MCF 10A (cell line): ENCODE measurements at regions of chr10 and their contacts with region 1.

Region 1: DNA sequence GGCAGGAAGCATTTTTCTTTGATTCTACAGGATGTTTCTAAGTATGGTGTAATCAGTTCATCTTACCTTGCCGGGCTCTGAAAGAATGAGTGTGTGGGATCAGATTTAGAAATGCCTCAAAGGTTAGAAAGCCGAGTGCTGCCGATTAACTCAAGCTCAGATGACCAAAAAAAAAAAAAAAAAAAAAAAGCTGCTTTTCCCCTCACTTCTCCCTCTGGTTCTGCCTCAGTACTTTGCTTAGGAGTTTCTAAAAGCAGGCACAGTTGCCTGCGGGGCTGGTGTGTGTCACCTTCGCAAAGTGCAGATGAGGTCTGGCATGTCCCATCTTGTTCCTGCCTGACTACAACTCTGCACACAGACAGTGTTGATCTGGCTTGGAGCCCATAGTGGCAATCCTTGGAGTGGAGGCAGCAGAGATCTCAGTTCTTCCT is 47.0 kb downstream of the KIAA1217 start:
- DNase-seq: peak; percentile 93
- H3K4me3 Mint-ChIP-seq: peak overlapping the region; percentile 84
- H3K27ac Mint-ChIP-seq: peak overlapping the region; percentile 97
- H3K4me1 Mint-ChIP-seq: peaks cover 42% of the 10 kb centered on the region
- H3K27me3 Mint-ChIP-seq: no peaks in the 10 kb centered on the region
- CTCF ChIP-seq: no peak

Region 2: GRCh38 chr10:24209946-24210491 is 45.9 kb before region 1 on chr10:
- CTCF ChIA-PET with region 1: interaction called, 3 read pairs
- POLR2A ChIA-PET with region 1: interaction called, 29 read pairs
- intact Hi-C with region 1: no loop called
- DNase-seq: peak; percentile 74
- H3K4me3 Mint-ChIP-seq: peak overlapping the region; percentile 76
- H3K27ac Mint-ChIP-seq: peak overlapping the region; percentile 1
- H3K4me1 Mint-ChIP-seq: peaks cover 22% of the 10 kb centered on the region
- H3K27me3 Mint-ChIP-seq: no peaks in the 10 kb centered on the region
- CTCF ChIP-seq: no peak

Region 3: GRCh38 chr10:24292304-24293293 is 36.7 kb after region 1 on chr10:
- CTCF ChIA-PET with region 1: no interaction called
- POLR2A ChIA-PET with region 1: interaction called, 12 read pairs
- intact Hi-C with region 1: loop called (anchors 5 kb)
- DNase-seq: peak; percentile 11
- H3K4me3 Mint-ChIP-seq: no peak overlapping the region
- H3K27ac Mint-ChIP-seq: peak overlapping the region; percentile 70
- H3K4me1 Mint-ChIP-seq: peaks cover 30% of the 10 kb centered on the region
- H3K27me3 Mint-ChIP-seq: no peaks in the 10 kb centered on the region
- CTCF ChIP-seq: no peak

Region 4: GRCh38 chr10:24344279-24344678 is 88.4 kb after region 1 on chr10:
- CTCF ChIA-PET with region 1: interaction called, 4 read pairs
- POLR2A ChIA-PET with region 1: interaction called, 22 read pairs
- intact Hi-C with region 1: loop called (anchors 1 kb)
- DNase-seq: peak; percentile 91
- H3K4me3 Mint-ChIP-seq: peak overlapping the region; percentile 52
- H3K27ac Mint-ChIP-seq: peak overlapping the region; percentile 90
- H3K4me1 Mint-ChIP-seq: peaks cover 45% of the 10 kb centered on the region
- H3K27me3 Mint-ChIP-seq: no peaks in the 10 kb centered on the region
- CTCF ChIP-seq: no peak

Region 5: DNA sequence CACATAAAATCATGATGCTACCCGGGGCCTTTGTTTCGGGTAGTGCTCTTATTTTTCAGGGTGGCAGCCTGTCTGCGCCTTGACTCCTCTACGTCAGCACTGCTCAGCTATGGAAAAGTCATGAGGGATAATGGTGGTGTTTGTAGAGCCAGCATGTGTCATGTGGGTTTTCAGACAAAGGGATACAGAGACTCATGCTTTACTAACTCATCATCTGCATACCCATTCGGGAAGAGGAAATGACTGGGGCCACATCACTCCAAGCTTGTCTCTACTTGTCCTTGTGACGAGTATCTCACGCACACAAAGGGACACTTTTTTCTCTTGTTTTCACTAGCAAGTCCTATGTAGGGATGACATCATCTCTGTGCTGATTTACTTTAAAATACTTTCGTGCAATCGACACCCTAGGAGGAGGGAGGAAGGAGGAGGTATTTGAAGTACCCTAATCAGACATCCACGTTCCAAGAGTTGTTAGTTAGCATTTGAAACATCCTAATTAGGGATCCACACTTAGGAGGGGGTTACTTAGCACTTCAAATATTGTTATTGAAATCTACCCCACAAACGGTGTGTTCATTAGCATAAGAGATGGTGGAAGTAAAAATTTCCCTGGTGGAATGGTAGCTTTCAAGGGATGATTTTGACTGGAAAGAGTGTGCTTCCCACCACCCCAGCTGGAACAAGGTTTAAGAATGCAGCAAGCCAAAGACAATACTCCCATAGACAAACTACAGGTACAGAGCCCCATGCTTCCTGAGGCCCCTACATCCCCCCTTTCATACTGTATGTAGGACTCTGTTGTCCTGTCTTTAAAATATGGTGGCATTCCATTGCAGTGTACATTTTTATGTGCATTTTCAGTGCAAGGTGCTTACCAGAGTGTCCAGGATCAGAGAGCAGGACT is 812.5 kb after region 1 on chr10:
- CTCF ChIA-PET with region 1: no interaction called
- POLR2A ChIA-PET with region 1: no interaction called
- intact Hi-C with region 1: loop called (anchors 5 kb)
- DNase-seq: peak; percentile 82
- H3K4me3 Mint-ChIP-seq: no peak overlapping the region
- H3K27ac Mint-ChIP-seq: peak overlapping the region; percentile 92
- H3K4me1 Mint-ChIP-seq: peaks cover 22% of the 10 kb centered on the region
- H3K27me3 Mint-ChIP-seq: no peaks in the 10 kb centered on the region
- CTCF ChIP-seq: no peak